Breast epithelium (tissue), 4 donors: ENCODE measurements at regions of chr19 and their contacts with region 1.

Region 1: DNA sequence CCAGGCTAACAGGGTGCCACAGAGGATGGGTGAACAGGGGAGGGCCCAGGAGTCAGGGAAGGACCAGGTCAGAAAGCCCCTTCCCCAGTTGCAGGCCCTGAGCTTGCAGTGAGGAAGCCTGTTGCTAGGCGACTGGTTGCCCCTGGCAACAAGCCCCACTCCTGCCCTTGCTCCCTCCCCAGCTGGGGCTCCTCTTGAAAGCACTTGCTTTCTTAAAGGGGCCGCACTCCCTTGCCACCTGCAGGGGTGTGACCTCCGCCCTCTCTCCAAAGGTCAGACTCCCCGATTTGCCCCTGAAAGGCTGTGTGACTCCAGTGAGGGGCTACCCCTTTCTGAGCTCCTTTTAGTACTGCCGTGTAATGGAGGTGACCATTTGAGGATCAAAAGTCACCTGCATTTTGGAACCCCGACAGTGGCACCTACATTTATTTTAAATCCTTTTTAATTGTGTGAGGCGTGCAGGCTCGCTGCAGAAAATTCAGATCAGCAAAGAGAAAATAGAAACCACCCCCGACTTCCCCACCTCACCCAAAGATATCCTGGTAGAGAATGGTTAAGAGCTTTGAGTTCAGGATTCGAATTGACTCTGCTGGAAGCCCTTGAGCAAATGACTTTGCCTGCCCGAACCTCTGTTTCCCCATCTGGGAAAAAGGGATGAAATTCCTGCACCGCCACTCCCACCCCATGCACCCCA is 4.8 kb downstream of the FCHO1 start:
- DNase-seq: no peak
- H3K4me3 ChIP-seq: no peak overlapping the region
- H3K27ac ChIP-seq: no peak overlapping the region
- H3K4me1 ChIP-seq: no peaks in the 10 kb centered on the region
- H3K27me3 ChIP-seq: no peaks in the 10 kb centered on the region
- CTCF ChIP-seq: no peak
- POLR2A ChIP-seq: no peak

Region 2: DNA sequence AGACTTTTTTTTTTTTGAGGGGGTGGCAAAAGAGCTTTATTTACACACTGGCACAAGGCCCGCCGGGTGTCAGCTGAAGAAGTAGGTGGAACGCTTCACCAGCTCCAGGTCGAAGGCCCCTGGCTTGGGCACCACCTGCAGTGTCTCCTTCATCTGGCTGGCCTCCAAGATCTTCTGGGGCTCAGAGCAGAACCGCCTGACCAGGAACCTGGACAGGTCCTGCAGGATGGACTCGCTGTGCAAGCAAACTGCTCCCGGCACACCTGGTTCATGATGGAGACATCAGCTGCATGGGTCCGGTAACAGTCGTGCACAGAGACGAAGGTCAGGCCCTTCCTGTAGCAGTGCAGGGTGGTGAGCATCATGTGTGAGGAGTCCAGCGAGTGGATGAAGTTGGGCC is 1853.9 kb before region 1 on chr19:
- intact Hi-C with region 1: no loop called
- DNase-seq: no peak
- H3K4me3 ChIP-seq: no peak overlapping the region
- H3K27ac ChIP-seq: no peak overlapping the region
- H3K4me1 ChIP-seq: no peaks in the 10 kb centered on the region
- H3K27me3 ChIP-seq: peaks cover 0 to 15% of the 10 kb centered on the region in 2 donors
- CTCF ChIP-seq: no peak
- POLR2A ChIP-seq: no peak

Region 3: DNA sequence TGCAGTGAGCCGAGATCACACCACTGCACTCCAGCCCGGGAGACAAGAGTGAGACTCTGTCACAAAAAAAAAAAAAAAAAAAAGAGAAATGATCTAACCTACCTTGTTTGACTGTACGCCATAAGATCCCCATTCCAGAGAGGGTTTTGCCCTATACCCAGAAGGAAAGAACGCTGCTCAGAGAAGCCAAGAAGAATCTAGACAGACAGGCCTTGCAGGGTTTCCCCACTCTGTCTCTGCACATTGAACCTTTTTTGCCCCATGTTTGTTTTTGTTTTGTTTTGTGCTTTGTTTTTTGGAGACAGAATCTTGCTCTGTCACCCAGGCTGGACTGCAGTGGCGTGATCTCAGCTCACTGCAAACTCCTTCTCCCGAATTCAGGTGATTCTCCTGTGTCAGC is 44.3 kb before region 1 on chr19:
- intact Hi-C with region 1: loop called (anchors 5 kb)
- DNase-seq: no peak
- H3K4me3 ChIP-seq: no peak overlapping the region
- H3K27ac ChIP-seq: peak overlapping the region; percentile 50 to 65
- H3K4me1 ChIP-seq: no peaks in the 10 kb centered on the region
- H3K27me3 ChIP-seq: no peaks in the 10 kb centered on the region
- CTCF ChIP-seq: no peak
- POLR2A ChIP-seq: no peak